Activated CD8-positive, alpha-beta T cell treated with anti-CD3 and anti-CD28 coated beads, Interleukin-2, amount 10 ng/mL, durations not matched to agents 7 days and 5 days (primary cell): ENCODE measurements at regions of chr19 and their contacts with region 1.

Region 1: DNA sequence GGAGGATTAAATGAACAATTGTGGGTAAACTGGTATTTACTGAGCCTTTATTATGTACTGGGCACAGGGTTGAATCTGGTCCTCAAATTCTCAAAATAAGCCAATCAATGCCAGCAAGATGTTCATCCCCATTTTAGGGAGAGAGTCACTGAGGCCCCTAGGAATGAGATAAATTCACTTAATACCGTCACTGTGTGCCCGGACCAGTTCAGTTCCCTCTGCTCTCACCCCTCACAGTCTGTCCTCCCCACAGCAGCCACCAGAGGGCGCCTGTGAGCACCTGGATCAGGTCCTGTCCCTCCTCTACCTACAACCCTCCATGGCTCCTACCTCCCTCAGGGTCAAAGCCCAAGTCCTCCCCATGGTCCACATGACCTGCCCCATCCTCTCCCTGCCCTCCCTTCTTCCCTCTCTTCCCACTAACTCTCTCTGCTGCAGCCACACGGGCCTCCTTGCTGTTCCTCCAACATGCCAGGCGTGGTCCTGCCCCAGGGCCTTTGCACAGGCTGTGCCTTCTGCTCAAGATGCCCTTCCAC is 42.0 kb upstream of the NFIC start:
- DNase-seq: peak; percentile 83
- ATAC-seq: peak; percentile 71
- H3K4me3 Mint-ChIP-seq: no peak overlapping the region
- H3K27ac Mint-ChIP-seq: no peak overlapping the region
- H3K4me1 Mint-ChIP-seq: no peaks in the 10 kb centered on the region
- H3K27me3 Mint-ChIP-seq: peaks cover 2% of the 10 kb centered on the region

Region 2: DNA sequence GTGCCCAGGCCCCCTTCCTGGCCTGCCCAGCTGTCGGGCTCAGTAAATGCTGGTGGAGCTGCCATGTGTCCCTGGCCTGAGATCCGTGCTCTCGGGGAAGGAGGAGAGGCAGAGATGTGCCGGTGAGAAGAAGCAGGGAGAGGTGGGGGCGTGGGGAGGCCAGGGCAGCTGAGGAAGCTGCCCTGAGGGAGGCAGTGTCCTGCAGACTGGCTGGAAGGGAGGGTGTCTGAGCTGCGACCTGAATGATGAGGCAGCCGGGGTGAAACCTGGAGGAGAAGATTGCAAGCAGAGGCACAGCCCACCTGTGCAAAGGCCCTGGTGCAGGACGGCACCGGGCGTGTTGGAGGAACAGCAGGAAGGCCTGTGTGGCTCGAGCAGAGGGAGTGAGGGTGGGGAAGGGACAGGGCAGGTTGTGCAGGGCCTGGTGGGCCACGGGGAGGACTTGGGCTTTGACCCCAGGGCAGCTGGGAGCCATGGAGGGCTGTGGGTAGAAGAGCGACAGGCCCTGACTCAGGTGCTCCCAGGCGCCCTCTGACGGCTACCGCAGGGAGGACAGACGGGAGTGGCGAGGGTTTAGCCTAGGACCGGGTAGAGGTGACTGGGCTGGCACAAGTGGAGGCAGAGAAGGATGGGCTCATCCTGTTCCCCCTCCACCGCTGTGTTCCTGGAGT is 113.9 kb before region 1 on chr19:
- CTCF ChIA-PET with region 1: no interaction called
- POLR2A ChIA-PET with region 1: no interaction called
- DNase-seq: peak; percentile 75
- ATAC-seq: peak; percentile 80
- H3K4me3 Mint-ChIP-seq: no peak overlapping the region
- H3K27ac Mint-ChIP-seq: peak overlapping the region; percentile 61
- H3K4me1 Mint-ChIP-seq: no peaks in the 10 kb centered on the region
- H3K27me3 Mint-ChIP-seq: no peaks in the 10 kb centered on the region

Region 3: DNA sequence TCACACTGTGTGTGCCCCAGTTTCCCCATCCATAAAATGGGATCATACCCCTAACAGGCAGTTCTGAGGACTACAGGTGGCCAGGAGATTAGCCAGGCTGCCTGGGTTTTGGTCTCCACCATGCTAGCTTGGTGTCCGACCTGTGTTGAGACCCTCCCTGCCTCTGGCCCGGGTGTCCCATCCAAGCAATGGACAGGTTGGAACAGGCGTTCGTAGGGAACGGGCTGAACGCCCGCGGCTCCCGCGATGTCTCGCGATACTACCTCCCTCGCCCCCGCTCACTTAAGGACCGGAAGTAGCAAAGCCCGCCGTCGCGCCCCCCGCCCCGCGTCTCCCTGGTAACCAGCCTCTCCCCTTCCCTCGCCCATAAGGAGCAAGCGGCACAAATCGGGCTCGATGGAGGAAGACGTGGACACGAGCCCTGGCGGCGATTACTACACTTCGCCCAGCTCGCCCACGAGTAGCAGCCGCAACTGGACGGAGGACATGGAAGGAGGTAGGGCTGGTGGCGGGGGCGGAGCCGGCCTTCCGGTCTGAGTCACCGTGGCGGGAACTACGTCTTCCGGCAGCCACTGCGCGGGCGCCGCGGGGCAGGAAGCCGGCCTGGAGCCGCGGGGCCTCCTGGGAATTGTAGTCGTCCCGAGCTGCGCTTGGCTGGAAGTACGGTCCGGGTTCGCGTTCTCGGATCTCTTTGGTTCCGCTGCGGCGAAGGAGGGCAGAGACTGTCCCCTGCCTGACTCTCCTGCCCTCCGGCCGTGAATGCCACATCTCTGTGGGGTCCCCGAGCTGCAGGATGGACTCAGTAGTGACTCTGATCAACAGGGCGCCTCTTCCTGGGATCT is 110.5 kb after region 1 on chr19:
- CTCF ChIA-PET with region 1: interaction called, 58 read pairs
- POLR2A ChIA-PET with region 1: no interaction called
- DNase-seq: peak; percentile 97
- ATAC-seq: peak; percentile 97
- H3K4me3 Mint-ChIP-seq: peak overlapping the region; percentile 96
- H3K27ac Mint-ChIP-seq: peak overlapping the region; percentile 99
- H3K4me1 Mint-ChIP-seq: peaks cover 14% of the 10 kb centered on the region
- H3K27me3 Mint-ChIP-seq: no peaks in the 10 kb centered on the region